ENCODE measurements at regions of chr3 and their contacts with region 1.

Region 1: GRCh38 chr3:15098503-15099363 is at the start of gene RBSN:
- DNase-seq: peak; percentile 98
- H3K4me3 ChIP-seq: peak within 1 kb of the TSS; percentile 83 to 94 (median 88)
- H3K27ac ChIP-seq: peak within 1 kb of the TSS; percentile 80 to 89 (median 88)
- H3K4me1 ChIP-seq: peaks cover 33 to 48% (median 43%) of the 10 kb centered on the region in 4 donors
- H3K27me3 ChIP-seq: no peaks in the 10 kb centered on the region
- CTCF ChIP-seq: peak in 1 of 3 experiments; percentile 22
- EP300 ChIP-seq: no peak
- POLR2A ChIP-seq: no peak
- total RNA-seq, gene RBSN: 31.6 to 45.7 (median 39.0) TPM

Region 2: GRCh38 chr3:14031271-14031670 is 1067.5 kb before region 1 on chr3:
- intact Hi-C with region 1: no loop called
- DNase-seq: no peak
- H3K4me3 ChIP-seq: no peak overlapping the region
- H3K27ac ChIP-seq: no peak overlapping the region
- H3K4me1 ChIP-seq: no peaks in the 10 kb centered on the region
- H3K27me3 ChIP-seq: no peaks in the 10 kb centered on the region
- CTCF ChIP-seq: no peak
- EP300 ChIP-seq: no peak
- POLR2A ChIP-seq: no peak

Region 3: GRCh38 chr3:14402304-14402811 is 696.4 kb before region 1 on chr3 and contains the start of gene SLC6A6:
- intact Hi-C with region 1: no loop called
- DNase-seq: peak; percentile 99
- H3K4me3 ChIP-seq: peak within 1 kb of the TSS; percentile 60 to 79 (median 74)
- H3K27ac ChIP-seq: peak within 1 kb of the TSS; percentile 88 to 89 (median 89)
- H3K4me1 ChIP-seq: peaks cover 32 to 53% (median 51%) of the 10 kb centered on the region in 4 donors
- H3K27me3 ChIP-seq: no peaks in the 10 kb centered on the region
- CTCF ChIP-seq: peak; percentile 49 to 59 (median 53)
- EP300 ChIP-seq: no peak
- POLR2A ChIP-seq: no peak
- total RNA-seq, gene SLC6A6: 15.0 to 36.2 (median 23.7) TPM

Region 4: DNA sequence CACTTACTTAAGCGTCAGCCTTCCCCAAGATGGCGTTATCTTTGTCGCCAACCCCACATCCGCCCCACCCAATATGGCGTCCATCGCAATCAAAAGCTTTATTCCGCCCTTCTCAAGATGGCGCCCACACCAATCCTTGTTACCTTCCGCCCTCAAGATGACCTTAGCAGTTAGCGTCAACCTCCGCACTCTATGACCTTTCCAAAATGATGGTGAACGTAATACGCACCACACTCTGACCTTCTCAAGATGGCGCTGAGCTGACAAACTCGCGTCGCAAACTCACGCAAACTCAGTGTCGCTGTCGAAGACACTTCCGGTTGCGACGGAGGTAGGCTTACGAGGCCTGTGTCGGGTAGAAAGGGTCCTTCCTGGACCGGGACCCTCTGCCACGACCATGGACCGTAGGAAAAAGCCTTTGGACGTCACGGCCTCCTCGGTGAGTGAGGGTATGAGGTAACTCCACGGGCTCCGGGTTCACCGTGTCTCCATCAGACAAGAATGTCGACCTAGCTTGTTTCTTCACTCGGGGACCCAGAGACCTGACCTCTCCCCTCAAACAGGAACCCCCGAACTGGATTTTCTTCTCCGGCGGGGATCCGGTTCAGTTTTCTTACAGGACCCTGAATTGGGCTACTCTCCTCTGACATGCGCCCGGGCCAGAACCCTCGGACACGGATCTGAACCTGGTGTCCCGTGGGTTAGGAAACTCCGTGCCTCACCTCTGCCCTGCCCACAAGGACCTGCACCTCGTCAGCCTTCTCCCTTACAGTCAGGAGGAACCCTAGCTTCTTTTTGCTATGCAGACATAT is 447.1 kb before region 1 on chr3 and contains the start of gene CCDC174:
- intact Hi-C with region 1: loop called (anchors 10 kb)
- DNase-seq: peak; percentile 99
- H3K4me3 ChIP-seq: peak within 1 kb of the TSS; percentile 79 to 84 (median 80)
- H3K27ac ChIP-seq: peak within 1 kb of the TSS; percentile 86 to 92 (median 88)
- H3K4me1 ChIP-seq: peaks cover 20 to 35% (median 29%) of the 10 kb centered on the region in 4 donors
- H3K27me3 ChIP-seq: no peaks in the 10 kb centered on the region
- CTCF ChIP-seq: peak in 1 of 3 experiments; percentile 16
- EP300 ChIP-seq: no peak
- POLR2A ChIP-seq: peak; percentile 57
- total RNA-seq, gene CCDC174: 10.8 to 17.0 (median 13.5) TPM